ENCODE measurements at regions of chr11 and their contacts with region 1.

Region 1: DNA sequence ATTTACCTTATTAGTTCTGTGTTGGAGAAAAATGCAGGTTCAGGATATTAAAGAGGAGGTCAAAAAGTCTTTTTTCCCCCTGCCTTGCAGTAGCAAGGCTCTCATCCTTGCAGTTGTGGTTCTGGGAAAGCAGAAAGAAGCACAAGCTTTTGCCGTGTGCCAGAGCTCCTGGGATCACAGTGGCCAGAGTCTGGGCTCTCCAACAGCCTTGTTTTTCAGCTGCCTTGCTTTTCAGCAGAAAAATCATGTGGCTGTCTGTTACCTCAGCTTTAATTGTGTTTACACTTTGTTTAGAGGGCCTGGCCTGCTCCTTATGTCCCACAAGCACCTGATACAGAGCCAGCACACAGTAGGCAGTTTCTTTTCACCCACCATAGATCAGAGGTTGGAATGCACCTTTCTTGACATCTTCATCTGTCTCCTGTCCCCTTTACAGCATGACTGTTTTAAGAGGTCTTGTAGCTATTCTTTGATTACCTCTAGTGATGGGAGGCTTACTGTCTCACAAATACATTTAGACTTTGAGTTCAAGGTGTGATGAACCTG is 67.5 kb downstream of the TEAD1 start:
- DNase-seq: no peak
- ATAC-seq: no peak
- H3K4me3 ChIP-seq: no peak overlapping the region
- H3K27ac ChIP-seq: no peak overlapping the region
- H3K4me1 ChIP-seq: peaks cover 22% of the 10 kb centered on the region
- H3K27me3 ChIP-seq: no peaks in the 10 kb centered on the region
- CTCF ChIP-seq: no peak

Region 2: GRCh38 chr11:12066799-12067508 is 674.8 kb before region 1 on chr11:
- CTCF ChIA-PET with region 1: no interaction called
- POLR2A ChIA-PET with region 1: no interaction called
- in situ Hi-C with region 1: no loop called
- intact Hi-C with region 1: no loop called
- DNase-seq: no peak
- ATAC-seq: peak; percentile 77
- H3K4me3 ChIP-seq: no peak overlapping the region
- H3K27ac ChIP-seq: peak overlapping the region; percentile 86
- H3K4me1 ChIP-seq: peaks cover 25% of the 10 kb centered on the region
- H3K27me3 ChIP-seq: no peaks in the 10 kb centered on the region
- CTCF ChIP-seq: no peak

Region 3: GRCh38 chr11:12411806-12412727 is 329.7 kb before region 1 on chr11:
- CTCF ChIA-PET with region 1: no interaction called
- POLR2A ChIA-PET with region 1: no interaction called
- in situ Hi-C with region 1: no loop called
- intact Hi-C with region 1: no loop called
- DNase-seq: no peak
- ATAC-seq: peak; percentile 95
- H3K4me3 ChIP-seq: no peak overlapping the region
- H3K27ac ChIP-seq: peak overlapping the region; percentile 20; the same call in 1 of the 2 replicates
- H3K4me1 ChIP-seq: peaks cover 10% of the 10 kb centered on the region
- H3K27me3 ChIP-seq: no peaks in the 10 kb centered on the region
- CTCF ChIP-seq: peak; percentile 86

Region 4: DNA sequence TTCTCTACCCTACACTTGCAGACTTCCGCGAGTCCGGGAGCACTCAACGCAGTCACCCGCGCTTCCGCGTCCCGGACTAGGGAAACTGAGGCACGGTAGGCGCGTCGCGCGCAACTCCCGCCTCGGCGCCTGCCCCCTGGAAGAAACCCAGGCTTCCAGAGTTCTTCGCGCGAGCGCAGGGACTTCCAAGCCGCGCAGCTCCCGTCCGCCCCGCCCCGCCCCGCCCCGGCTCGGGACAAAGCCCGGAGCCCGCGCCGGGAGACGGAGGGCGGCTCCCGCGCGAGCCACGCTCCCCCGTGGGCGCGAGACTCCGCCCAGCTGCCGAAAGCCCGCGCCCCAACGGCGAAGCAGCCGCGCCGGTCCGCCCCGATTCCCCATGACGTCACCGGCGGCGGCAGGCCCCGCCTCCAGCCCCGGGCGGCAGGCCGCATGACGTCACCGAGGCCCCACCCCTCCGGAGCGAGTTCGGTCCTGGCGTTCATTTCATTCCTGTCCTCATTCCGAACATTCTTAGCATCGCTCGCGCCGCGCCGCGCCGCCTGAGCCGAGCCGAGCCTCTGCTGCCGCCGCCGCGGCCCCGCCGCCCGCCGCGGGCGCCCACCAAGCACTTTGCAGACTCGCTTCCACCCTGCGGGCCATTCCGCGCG is 67.7 kb before region 1 on chr11 and contains the start of gene TEAD1:
- CTCF ChIA-PET with region 1: no interaction called
- POLR2A ChIA-PET with region 1: no interaction called
- in situ Hi-C with region 1: no loop called
- intact Hi-C with region 1: no loop called
- DNase-seq: peak; percentile 51
- ATAC-seq: peak; percentile 93
- H3K4me3 ChIP-seq: peak within 1 kb of the TSS; percentile 78 to 82
- H3K27ac ChIP-seq: peak within 1 kb of the TSS; percentile 90
- H3K4me1 ChIP-seq: peaks cover 31% of the 10 kb centered on the region
- H3K27me3 ChIP-seq: no peaks in the 10 kb centered on the region
- CTCF ChIP-seq: no peak
- total RNA-seq, gene TEAD1: 102 TPM

Region 5: GRCh38 chr11:12693479-12694181 is 48.1 kb before region 1 on chr11:
- CTCF ChIA-PET with region 1: no interaction called
- POLR2A ChIA-PET with region 1: interaction called, 14 read pairs
- in situ Hi-C with region 1: no loop called
- intact Hi-C with region 1: no loop called
- DNase-seq: peak; percentile 93
- ATAC-seq: peak; percentile 82
- H3K4me3 ChIP-seq: peak overlapping the region; percentile 26 to 50
- H3K27ac ChIP-seq: peak overlapping the region; percentile 97
- H3K4me1 ChIP-seq: peaks cover 90% of the 10 kb centered on the region
- H3K27me3 ChIP-seq: no peaks in the 10 kb centered on the region
- CTCF ChIP-seq: no peak

Measured in Panc1 (cell line).